Activated CD4-positive, alpha-beta memory T cell treated with anti-CD3 and anti-CD28 coated beads, Interleukin-2, amount 10 ng/mL, durations not matched to agents 7 days and 5 days (primary cell): ENCODE measurements at regions of chr12 and their contacts with region 1.

Region 1: DNA sequence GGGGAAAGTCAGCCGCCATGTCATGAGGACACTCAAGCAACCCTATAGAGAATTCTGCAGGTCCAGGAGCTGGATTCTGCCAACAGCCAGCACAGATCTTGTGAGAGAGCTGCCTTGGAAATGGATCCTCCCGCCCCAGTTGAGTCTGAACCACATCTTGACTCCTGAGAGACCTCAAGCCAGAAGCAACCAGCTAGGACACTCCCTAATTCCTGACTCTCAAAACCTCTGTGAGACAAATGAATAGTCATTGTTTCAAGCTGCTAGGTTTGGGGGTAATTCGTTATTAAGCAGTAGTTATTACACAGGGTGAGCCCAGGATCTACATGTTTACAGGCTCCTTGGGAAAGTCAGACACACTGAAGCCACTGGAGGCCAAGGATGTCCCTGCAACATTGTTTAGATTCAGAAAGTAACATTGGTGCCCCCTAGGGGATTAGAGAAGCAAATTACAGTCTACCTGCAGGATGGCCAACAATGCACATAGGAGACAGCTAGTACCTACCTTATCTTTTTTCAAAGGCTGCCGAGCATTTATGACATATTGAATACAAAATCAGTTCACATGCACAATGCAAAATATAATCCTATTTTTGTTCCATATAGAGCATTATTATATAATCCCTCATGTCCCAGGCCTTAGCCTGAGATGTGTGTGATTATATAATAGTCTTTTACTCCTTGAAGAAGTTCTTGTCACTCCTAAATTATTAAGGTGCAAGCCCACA is 57.9 kb upstream of the FICD start:
- DNase-seq: no peak
- H3K4me3 Mint-ChIP-seq: no peak overlapping the region
- H3K27ac Mint-ChIP-seq: no peak overlapping the region
- H3K4me1 Mint-ChIP-seq: peaks cover 3% of the 10 kb centered on the region
- H3K27me3 Mint-ChIP-seq: peaks cover 19% of the 10 kb centered on the region

Region 2: GRCh38 chr12:107992870-107993451 is 464.2 kb before region 1 on chr12:
- CTCF ChIA-PET with region 1: interaction called, 11 read pairs
- POLR2A ChIA-PET with region 1: no interaction called
- DNase-seq: no peak
- H3K4me3 Mint-ChIP-seq: no peak overlapping the region
- H3K27ac Mint-ChIP-seq: no peak overlapping the region
- H3K4me1 Mint-ChIP-seq: no peaks in the 10 kb centered on the region
- H3K27me3 Mint-ChIP-seq: peaks cover 19% of the 10 kb centered on the region

Region 3: DNA sequence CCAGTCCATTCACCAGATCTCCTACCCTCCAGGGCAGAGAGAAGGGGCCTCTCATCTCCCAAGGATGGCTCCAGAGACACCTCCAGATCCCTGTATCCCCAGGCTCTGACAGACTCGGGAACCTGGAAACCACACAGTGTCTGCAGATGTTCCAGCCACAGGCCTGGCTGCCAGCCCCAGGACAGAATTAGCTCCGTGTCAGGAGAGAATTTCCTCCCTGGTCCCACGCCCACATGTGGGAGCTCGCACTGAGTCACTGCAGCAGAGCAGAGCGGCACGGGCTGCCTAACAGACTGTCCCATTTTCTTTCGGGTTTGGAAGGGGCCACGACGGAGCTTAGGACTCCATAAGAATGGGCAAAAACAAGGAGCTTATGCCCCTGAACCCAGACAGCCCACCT is 151.7 kb before region 1 on chr12:
- CTCF ChIA-PET with region 1: no interaction called
- POLR2A ChIA-PET with region 1: no interaction called
- DNase-seq: no peak
- H3K4me3 Mint-ChIP-seq: no peak overlapping the region
- H3K27ac Mint-ChIP-seq: peak overlapping the region; percentile 47
- H3K4me1 Mint-ChIP-seq: peaks cover 41% of the 10 kb centered on the region
- H3K27me3 Mint-ChIP-seq: peaks cover 18% of the 10 kb centered on the region

Region 4: GRCh38 chr12:108399514-108399913 is 57.7 kb before region 1 on chr12:
- CTCF ChIA-PET with region 1: no interaction called
- POLR2A ChIA-PET with region 1: no interaction called
- DNase-seq: no peak
- H3K4me3 Mint-ChIP-seq: no peak overlapping the region
- H3K27ac Mint-ChIP-seq: no peak overlapping the region
- H3K4me1 Mint-ChIP-seq: no peaks in the 10 kb centered on the region
- H3K27me3 Mint-ChIP-seq: no peaks in the 10 kb centered on the region

Region 5: GRCh38 chr12:108418164-108418890 is 38.8 kb before region 1 on chr12:
- CTCF ChIA-PET with region 1: no interaction called
- POLR2A ChIA-PET with region 1: no interaction called
- DNase-seq: no peak
- H3K4me3 Mint-ChIP-seq: no peak overlapping the region
- H3K27ac Mint-ChIP-seq: no peak overlapping the region
- H3K4me1 Mint-ChIP-seq: no peaks in the 10 kb centered on the region
- H3K27me3 Mint-ChIP-seq: no peaks in the 10 kb centered on the region

Region 6: DNA sequence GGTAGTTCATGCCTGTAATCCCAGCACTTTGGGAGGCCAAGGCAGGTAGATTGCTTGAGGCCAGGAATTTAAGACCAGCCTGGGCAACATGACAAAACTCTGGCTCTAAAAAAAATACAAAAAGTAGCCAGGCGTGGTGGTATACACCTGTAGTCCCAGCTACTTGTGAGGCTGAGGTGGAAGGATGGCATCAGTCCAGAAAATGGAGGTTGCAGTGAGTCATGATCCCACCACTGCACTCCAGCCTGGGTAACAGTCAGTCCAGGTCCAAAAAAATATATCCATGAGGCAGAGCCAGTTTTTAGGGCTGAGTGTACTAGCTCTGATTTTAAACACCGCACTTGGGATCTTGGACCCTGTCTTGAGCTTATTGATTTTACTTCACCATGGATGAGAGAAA is 27.3 kb after region 1 on chr12:
- CTCF ChIA-PET with region 1: no interaction called
- POLR2A ChIA-PET with region 1: no interaction called
- DNase-seq: no peak
- H3K4me3 Mint-ChIP-seq: no peak overlapping the region
- H3K27ac Mint-ChIP-seq: no peak overlapping the region
- H3K4me1 Mint-ChIP-seq: no peaks in the 10 kb centered on the region
- H3K27me3 Mint-ChIP-seq: peaks cover 4% of the 10 kb centered on the region